ENCODE measurements at regions of chr17 and their contacts with region 1.

Region 1: DNA sequence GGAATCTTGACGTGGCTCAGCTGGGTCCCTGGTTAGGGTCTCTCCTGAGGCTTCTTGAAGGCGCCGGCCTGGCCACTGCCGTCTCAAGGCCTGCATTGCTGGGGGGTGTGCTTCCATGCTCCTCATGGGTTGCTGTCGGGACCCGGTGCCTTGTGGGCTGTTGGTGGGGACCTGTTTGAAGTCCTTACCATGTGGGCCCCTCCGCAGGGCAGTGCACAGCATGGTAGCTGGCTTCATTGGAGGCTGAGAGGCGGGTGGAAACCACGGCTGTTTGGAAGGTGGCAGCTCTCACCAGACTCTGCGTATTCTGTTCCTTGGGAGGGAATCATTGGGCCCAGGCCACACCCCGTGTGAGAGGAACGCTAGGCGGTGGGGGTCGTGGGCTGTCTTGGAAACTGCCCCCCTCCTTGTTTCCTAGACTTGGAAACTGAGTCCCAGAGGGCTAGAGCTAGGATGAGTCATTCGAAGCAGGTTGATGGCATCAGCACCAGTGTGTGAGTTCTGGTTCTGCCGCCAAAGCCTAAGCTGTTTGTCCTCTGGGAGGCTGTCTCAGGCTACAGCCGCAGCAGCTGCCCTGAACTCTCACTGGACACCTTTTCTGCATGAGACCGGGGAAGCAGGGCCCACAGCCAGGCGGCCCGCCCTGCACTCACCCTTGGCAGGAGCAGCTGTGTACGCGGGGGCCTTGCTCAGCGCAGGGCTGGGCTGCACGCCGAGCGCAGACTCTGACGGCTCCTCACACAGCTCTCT is 35.2 kb downstream of the ZNF750 start:
- DNase-seq: peak; percentile 61
- H3K4me3 ChIP-seq: no peak overlapping the region
- H3K27ac ChIP-seq: peak overlapping the region; percentile 28 to 68
- H3K4me1 ChIP-seq: no peaks in the 10 kb centered on the region
- H3K27me3 ChIP-seq: no peaks in the 10 kb centered on the region
- CTCF ChIP-seq: peak in 1 of 4 experiments; percentile 36
- POLR2A ChIP-seq: no peak

Region 2: DNA sequence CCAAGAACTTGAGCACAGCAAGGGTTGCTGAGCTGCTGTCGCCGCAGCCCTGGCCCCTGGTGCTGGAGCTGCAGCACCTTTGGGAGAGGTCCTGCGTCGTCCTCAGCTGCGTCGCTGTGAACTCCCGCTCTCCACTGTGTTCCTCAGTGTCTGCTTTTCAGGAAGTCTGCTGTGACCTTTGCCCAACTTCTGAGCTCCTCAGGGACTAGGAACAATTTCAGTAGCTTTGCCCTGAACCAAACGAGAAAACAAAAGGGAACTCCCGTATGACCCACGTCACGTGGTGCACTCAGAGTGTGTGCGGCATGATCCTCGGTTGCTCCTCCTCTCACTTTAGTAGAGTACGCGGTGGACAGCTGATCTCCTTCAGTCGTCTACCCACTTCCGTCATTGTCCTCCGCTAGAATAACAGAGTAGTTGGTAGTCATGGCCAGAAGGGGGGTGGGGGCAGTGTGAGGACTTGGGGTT is 200.6 kb before region 1 on chr17:
- intact Hi-C with region 1: no loop called
- DNase-seq: no peak
- H3K4me3 ChIP-seq: no peak overlapping the region
- H3K27ac ChIP-seq: no peak overlapping the region
- H3K4me1 ChIP-seq: no peaks in the 10 kb centered on the region
- H3K27me3 ChIP-seq: no peaks in the 10 kb centered on the region
- CTCF ChIP-seq: no peak
- POLR2A ChIP-seq: no peak

Region 3: GRCh38 chr17:82848022-82848592 is 43.5 kb after region 1 on chr17:
- intact Hi-C with region 1: no loop called
- DNase-seq: peak; percentile 86
- H3K4me3 ChIP-seq: peak overlapping the region; percentile 20 to 28
- H3K27ac ChIP-seq: peak overlapping the region; percentile 78 to 90
- H3K4me1 ChIP-seq: no peaks in the 10 kb centered on the region
- H3K27me3 ChIP-seq: no peaks in the 10 kb centered on the region
- CTCF ChIP-seq: no peak
- POLR2A ChIP-seq: no peak

Region 4: GRCh38 chr17:82871056-82871903 is 66.7 kb after region 1 on chr17:
- intact Hi-C with region 1: loop called (anchors 5 kb)
- DNase-seq: no peak
- H3K4me3 ChIP-seq: no peak overlapping the region
- H3K27ac ChIP-seq: no peak overlapping the region
- H3K4me1 ChIP-seq: peaks cover 7% of the 10 kb centered on the region
- H3K27me3 ChIP-seq: no peaks in the 10 kb centered on the region
- CTCF ChIP-seq: no peak
- POLR2A ChIP-seq: no peak

Measured in prostate gland (tissue), 2 donors.